ENCODE measurements at regions of chr12 and their contacts with region 1.

Region 1: GRCh38 chr12:6278439-6279255 is 31.8 kb upstream of the PLEKHG6 start:
- DNase-seq: peak; percentile 76 to 88 (median 85)
- H3K4me3 ChIP-seq: peak overlapping the region; percentile 48 to 76 (median 63)
- H3K27ac ChIP-seq: peak overlapping the region in 1 of 2 experiments; percentile 71
- H3K4me1 ChIP-seq: peaks cover 0 to 21% (median 15%) of the 10 kb centered on the region in 4 experiments
- H3K27me3 ChIP-seq: peaks cover 0 to 6% (median 0%) of the 10 kb centered on the region in 5 experiments

Region 2: DNA sequence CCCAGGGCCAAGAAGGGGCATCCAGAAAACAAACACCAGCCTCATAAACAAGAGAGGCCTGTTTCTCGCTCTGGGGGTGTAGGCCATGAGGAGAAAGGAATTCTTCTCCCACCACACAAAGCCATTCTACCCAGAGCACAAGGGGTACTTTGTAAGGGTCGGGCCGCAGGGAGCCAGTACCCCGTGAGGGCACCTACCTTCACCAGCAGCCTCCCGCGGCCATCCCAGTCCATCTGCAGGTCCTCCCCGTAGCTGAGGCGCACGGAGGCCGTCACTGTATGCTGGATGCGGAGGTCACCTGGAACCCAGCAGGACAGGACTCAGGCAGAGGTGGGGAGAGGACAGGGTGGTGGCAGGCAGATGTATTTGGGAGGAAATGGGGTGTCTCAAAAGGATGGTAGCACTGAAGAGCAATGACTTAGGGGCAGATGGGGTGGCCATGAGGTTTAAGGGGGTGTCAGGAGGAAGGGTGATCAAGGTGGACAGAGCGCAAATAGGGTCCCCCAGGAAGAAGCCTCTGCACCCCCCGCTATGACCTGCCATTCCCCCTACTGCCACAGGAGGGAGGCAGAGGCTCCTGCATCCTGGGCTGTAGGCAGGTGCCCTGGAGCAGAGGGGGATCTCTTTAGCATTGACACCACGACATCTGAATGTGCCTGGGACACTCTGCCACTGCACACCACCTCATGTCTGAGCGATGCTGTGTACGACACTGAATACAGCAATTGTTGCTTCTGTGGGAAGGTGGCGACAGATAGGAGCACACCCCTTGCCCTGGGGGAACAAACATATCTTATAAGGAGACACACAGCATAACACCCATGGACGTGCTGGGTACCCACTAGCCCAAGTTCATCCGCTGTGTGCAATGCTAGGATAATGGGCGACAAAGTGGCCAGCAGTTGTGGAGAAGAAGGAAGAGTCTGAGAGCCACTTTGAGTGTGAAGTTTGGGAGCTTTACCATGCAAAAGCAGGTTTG is 215.6 kb before region 1 on chr12:
- CTCF ChIA-PET with region 1: interaction called, 100 read pairs
- POLR2A ChIA-PET with region 1: interaction called, 3 read pairs
- DNase-seq: peak; percentile 67 to 84 (median 75)
- H3K4me3 ChIP-seq: no peak overlapping the region
- H3K27ac ChIP-seq: no peak overlapping the region
- H3K4me1 ChIP-seq: peaks cover 0 to 14% (median 7%) of the 10 kb centered on the region in 4 experiments
- H3K27me3 ChIP-seq: no peaks in the 10 kb centered on the region

Region 3: DNA sequence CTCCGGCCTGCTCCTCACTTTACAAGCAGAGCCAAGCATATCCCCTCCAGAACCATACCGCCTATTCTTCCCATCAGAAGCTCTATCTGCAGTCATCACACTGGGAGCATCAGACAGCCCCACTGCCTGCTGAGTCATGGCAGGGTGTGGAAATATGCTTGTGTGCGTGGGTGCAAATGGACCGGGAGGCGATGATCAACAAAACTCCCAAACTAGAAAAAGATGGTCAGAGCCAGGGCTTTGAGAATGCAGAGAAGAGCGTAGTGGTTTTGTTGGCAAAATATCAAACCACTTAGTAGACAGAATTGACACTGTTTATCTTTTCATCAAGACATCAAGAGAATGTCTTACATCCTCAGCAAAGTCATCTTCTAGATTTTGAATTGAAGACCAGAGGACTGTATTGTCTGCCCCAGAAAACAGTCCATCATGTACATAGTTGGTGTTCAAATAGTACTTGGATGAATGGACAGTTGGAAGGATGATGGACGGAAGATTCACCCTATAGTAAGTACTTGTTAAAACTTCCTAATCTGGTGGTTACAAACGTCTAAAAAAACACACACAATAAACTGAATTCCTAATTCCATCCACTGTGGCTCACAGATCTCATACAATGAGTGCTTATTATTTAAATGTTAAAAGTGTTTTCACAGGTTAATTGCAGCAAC is 209.1 kb before region 1 on chr12:
- CTCF ChIA-PET with region 1: interaction called, 48 read pairs
- POLR2A ChIA-PET with region 1: interaction called, 3 read pairs
- DNase-seq: peak in 2 of 3 donors; percentile 56 to 58
- H3K4me3 ChIP-seq: no peak overlapping the region
- H3K27ac ChIP-seq: no peak overlapping the region
- H3K4me1 ChIP-seq: peaks cover 7 to 38% (median 27%) of the 10 kb centered on the region in 4 experiments
- H3K27me3 ChIP-seq: no peaks in the 10 kb centered on the region

Region 4: DNA sequence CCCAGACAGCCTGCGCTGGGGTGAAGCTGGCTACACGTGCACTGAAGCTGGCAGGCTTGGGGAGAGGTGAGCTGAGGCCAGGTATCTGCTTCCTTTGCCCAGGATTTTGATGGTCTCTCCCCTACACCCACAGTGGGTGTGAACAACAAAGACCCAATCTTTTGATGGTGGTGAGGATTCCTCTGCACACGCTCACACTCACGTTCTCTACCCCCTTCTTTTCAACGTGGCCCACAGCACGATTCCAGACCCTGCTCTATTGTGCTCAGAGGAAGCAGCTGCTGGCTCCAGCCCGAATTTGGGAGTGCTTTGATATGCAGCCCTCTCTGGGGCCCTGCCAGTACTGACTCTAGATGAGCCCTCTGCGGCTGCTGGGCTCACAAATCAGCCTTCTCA is 73.5 kb before region 1 on chr12:
- CTCF ChIA-PET with region 1: interaction called, 10 read pairs
- POLR2A ChIA-PET with region 1: no interaction called
- DNase-seq: peak in 2 of 3 donors; percentile 39 to 72
- H3K4me3 ChIP-seq: no peak overlapping the region
- H3K27ac ChIP-seq: no peak overlapping the region
- H3K4me1 ChIP-seq: peaks cover 0 to 38% (median 28%) of the 10 kb centered on the region in 4 experiments
- H3K27me3 ChIP-seq: peaks cover 0 to 26% (median 13%) of the 10 kb centered on the region in 5 experiments

Region 5: GRCh38 chr12:6219980-6220379 is 58.7 kb before region 1 on chr12:
- CTCF ChIA-PET with region 1: no interaction called
- POLR2A ChIA-PET with region 1: no interaction called
- DNase-seq: no peak
- H3K4me3 ChIP-seq: no peak overlapping the region
- H3K27ac ChIP-seq: no peak overlapping the region
- H3K4me1 ChIP-seq: peaks cover 0 to 19% (median 4%) of the 10 kb centered on the region in 4 experiments
- H3K27me3 ChIP-seq: no peaks in the 10 kb centered on the region

Region 6: DNA sequence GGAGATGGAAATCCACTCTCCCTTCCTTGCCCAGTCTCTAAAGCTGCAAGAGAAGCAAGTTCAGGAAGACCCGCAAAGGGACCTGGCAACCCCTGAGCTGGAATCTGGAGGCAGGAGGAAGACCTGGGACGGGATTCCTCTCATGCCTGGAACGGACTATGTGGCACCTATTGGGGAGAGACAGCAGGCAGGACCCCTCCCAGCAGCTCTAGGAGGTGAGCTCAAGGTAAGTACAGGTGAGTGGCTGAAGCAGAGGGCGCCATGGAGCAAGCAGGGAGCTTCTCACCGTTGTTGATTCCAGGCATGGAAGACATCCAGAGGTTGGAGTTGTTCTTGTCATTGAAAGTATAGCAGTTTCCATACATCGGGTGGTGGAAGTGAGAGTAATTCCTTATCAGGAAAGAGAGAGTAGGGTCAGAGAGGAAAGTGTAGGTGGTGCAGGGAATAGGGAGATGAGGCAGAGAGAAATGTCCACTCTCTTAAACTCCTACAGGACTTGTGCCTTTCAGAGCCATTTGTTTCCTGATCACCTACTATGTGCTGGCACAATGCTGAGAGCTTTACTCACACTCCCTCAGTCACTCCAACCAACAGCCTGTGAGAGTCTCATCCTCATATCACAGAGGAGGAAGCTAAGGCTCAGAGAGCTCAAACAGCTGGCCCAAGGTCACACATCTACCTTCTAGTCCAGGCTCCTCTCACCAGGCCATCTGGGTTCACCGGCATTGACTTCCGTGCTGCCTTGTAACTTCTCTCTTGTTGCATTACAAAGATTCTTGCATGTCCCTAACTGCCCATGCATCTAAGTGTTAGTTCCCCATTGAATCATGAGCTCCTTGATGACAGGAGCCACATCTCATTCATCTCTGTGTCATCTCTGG is 77.1 kb after region 1 on chr12:
- CTCF ChIA-PET with region 1: no interaction called
- POLR2A ChIA-PET with region 1: no interaction called
- DNase-seq: no peak
- H3K4me3 ChIP-seq: no peak overlapping the region
- H3K27ac ChIP-seq: no peak overlapping the region
- H3K4me1 ChIP-seq: peaks cover 0 to 46% (median 11%) of the 10 kb centered on the region in 4 experiments
- H3K27me3 ChIP-seq: no peaks in the 10 kb centered on the region

Region 7: DNA sequence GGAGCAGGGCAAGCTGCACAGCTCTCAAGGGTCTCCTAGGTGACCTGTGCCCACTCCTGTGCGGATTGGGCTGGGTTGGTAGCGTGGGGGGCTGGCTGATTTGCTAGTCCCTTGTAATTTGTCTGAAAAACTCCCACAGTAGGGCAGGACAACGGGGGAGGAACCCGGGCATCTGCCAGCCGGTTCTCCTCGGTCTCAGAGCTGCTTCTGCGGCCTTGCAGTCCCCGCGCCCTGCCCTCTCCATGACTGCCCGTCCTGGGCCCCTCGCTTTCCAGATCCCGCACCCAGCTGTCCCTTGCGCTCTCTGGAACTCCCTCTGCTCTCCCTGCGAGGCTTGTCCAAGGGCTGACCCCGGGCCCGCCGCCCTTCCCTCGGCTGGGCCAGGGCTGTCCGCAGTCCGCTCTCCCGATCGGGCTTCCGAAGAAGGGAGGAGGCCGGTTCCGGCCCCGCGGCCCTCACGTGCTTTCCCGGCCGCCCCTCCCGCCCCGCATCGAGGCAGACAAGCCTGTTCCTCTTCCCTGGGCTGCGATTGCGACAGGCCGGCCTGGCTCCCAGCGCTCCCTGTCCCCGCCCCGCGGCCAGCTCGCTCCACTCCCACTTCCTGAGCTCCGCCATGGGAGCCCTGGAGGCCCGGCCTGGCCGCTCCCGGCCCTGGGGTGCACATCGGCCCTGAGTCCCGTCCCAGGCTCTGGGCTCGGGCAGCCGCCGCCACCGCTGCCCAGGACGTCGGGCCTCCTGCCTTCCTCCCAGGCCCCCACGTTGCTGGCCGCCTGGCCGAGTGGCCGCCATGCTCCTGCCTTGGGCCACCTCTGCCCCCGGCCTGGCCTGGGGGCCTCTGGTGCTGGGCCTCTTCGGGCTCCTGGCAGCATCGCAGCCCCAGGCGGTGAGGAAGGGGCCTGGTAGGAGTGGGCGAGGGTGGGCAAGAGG is 105.2 kb after region 1 on chr12 and contains the start of gene LTBR:
- CTCF ChIA-PET with region 1: no interaction called
- POLR2A ChIA-PET with region 1: no interaction called
- DNase-seq: peak; percentile 33 to 57 (median 55)
- H3K4me3 ChIP-seq: peak within 1 kb of the TSS; percentile 47 to 76 (median 70)
- H3K27ac ChIP-seq: peak within 1 kb of the TSS; percentile 68 to 83
- H3K4me1 ChIP-seq: peaks cover 0 to 41% (median 27%) of the 10 kb centered on the region in 4 experiments
- H3K27me3 ChIP-seq: no peaks in the 10 kb centered on the region